Panc1 (cell line): ENCODE measurements at regions of chr2 and their contacts with region 1.

Region 1: DNA sequence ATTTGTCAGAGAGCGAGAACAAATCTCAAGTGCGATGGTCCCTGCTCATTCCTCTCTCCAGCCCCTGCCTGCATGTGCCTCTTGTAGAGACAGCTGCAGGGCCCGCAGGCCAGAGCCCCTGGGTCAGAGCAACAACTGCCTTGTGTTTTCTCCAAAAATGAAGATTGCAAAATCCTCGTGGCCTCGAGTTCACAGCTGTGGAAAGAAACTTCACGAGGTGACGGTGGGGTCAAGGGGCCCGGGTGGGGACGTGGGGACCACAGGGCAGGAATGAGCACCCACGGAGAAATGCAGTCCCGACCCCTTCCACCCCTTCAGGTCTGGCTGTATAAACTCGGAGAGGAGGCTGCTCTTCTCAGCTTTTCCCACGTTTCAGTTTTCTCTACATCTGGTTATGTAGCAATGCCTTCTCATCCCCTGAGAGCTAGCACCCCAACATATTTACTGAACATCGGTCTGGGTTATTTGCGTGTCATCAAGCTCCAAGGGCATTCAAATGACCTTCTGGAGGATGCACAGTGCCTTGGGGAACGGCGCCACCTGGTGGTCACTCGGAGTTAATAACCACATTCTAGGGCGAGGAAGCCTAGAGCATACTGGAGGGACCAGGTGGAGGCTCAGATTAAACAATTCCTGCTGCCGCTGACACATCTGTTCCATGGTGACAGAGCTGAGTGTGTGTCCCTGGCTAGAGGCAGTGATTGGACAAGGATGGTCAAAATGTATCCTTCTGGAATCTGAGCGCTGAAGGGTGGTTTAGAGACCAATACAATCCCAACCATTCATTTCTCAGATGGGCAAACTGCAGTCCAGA is 91.4 kb upstream of the CYRIA start:
- DNase-seq: peak; percentile 41
- ATAC-seq: peak; percentile 93
- H3K4me3 ChIP-seq: no peak overlapping the region
- H3K27ac ChIP-seq: no peak overlapping the region
- H3K4me1 ChIP-seq: no peaks in the 10 kb centered on the region
- H3K27me3 ChIP-seq: no peaks in the 10 kb centered on the region; the same call in 1 of the 2 replicates
- CTCF ChIP-seq: peak; percentile 89

Region 2: DNA sequence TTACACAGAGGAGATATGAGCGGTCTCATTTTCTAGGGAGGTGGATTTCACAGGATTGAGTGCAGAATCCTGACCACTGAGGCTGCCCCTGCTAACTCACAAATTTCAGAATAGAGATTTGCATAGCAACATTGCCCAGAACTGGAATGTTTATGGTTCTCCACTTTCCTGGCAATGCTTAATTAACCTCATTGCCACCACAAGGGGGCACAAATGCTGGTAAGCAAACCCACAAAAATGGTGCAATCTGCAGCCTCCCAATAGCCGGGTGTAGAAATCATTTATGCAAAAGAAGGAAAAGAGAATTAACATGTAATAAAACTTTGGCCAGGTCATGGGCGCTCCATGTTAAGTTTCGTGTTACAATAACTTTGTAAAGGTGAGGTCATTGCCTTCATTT is 203.8 kb before region 1 on chr2:
- CTCF ChIA-PET with region 1: no interaction called
- POLR2A ChIA-PET with region 1: no interaction called
- in situ Hi-C with region 1: no loop called
- intact Hi-C with region 1: loop called (anchors 1 kb)
- DNase-seq: no peak
- ATAC-seq: no peak
- H3K4me3 ChIP-seq: no peak overlapping the region
- H3K27ac ChIP-seq: no peak overlapping the region
- H3K4me1 ChIP-seq: no peaks in the 10 kb centered on the region
- H3K27me3 ChIP-seq: no peaks in the 10 kb centered on the region
- CTCF ChIP-seq: peak; percentile 67